B cell (primary cell): ENCODE measurements at regions of chr12 and their contacts with region 1.

Region 1: DNA sequence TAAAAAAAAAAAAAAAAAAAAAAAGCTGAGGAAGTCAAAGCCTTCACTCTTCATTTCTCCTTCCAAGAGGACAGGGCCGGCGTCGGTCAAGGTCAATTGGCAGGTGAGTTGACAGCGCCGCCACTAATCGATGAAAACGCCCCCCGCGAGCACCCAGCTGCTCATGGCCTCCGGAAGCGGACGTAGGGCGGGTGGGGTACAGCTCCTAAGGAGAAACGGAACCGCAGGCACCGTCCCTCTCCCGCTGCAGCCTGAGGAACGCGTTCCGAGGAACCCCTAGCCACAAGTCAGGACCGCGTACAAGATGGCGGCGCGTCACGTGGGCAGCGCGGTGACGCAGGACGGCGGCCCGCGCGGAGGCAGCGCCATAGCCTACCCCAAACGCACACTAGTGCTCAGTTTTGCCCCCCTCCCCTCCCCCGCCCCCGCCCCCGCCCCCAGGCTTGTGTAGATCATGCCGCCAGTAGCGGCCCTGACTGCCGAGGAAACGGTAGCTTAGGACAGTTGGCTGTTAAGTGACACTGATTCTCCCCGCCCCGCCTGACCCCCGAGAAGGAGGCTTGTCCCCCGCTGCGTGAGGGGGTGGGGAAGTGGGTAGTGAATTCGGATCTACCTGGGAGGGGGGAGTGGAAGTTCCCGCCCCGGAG is at the start of gene ATF1:
- DNase-seq: peak; percentile 95
- ATAC-seq: peak; percentile 80
- H3K4me3 ChIP-seq: peak within 1 kb of the TSS; percentile 92 to 98 (median 96)
- H3K4me3 Mint-ChIP-seq: peak within 1 kb of the TSS; percentile 91
- H3K27ac ChIP-seq: peak within 1 kb of the TSS; percentile 95
- H3K27ac Mint-ChIP-seq: peak within 1 kb of the TSS; percentile 99
- H3K4me1 ChIP-seq: peaks cover 10 to 33% of the 10 kb centered on the region in 2 donors
- H3K4me1 Mint-ChIP-seq: peaks cover 33% of the 10 kb centered on the region
- H3K27me3 ChIP-seq: no peaks in the 10 kb centered on the region
- H3K27me3 Mint-ChIP-seq: no peaks in the 10 kb centered on the region
- CTCF ChIP-seq: no peak
- total RNA-seq, gene ATF1: 39.5 and 45.4 TPM in 2 replicates

Region 2: GRCh38 chr12:50400598-50401364 is 363.0 kb before region 1 on chr12 and contains the start of gene LARP4:
- CTCF ChIA-PET with region 1: no interaction called
- POLR2A ChIA-PET with region 1: no interaction called
- intact Hi-C with region 1: loop called (anchors 2 kb)
- DNase-seq: peak; percentile 93
- ATAC-seq: peak; percentile 94
- H3K4me3 ChIP-seq: peak within 1 kb of the TSS; percentile 53 to 90 (median 81)
- H3K4me3 Mint-ChIP-seq: peak within 1 kb of the TSS; percentile 92
- H3K27ac ChIP-seq: peak within 1 kb of the TSS; percentile 62 to 88
- H3K27ac Mint-ChIP-seq: peak within 1 kb of the TSS; percentile 93
- H3K4me1 ChIP-seq: peaks cover 22 to 24% of the 10 kb centered on the region in 2 donors
- H3K4me1 Mint-ChIP-seq: peaks cover 38% of the 10 kb centered on the region
- H3K27me3 ChIP-seq: no peaks in the 10 kb centered on the region
- H3K27me3 Mint-ChIP-seq: peaks cover 9% of the 10 kb centered on the region
- CTCF ChIP-seq: no peak
- total RNA-seq, gene LARP4: 42.0 and 48.4 TPM in 2 replicates

Region 3: DNA sequence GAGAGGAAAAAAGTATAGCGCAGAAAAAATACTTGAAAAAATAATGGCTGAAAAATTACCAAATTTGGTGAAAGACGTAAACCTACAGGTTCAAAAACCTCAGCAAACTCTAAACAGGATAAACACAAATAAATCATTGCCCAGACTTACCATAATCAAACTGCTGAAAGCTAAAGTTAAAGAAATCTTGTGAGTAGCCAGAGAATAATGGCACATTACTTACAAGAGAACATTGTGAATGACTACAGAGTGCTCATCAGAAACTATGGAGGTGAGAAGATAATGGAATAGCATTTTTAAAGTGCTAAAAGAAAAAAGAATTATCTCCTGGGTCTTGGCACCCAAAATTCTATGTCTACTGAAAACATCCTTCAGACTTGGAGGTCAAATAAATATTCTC is 36.1 kb after region 1 on chr12:
- CTCF ChIA-PET with region 1: no interaction called
- POLR2A ChIA-PET with region 1: no interaction called
- intact Hi-C with region 1: no loop called
- DNase-seq: no peak
- ATAC-seq: no peak
- H3K4me3 ChIP-seq: no peak overlapping the region
- H3K4me3 Mint-ChIP-seq: no peak overlapping the region
- H3K27ac ChIP-seq: no peak overlapping the region
- H3K27ac Mint-ChIP-seq: no peak overlapping the region
- H3K4me1 ChIP-seq: no peaks in the 10 kb centered on the region
- H3K4me1 Mint-ChIP-seq: no peaks in the 10 kb centered on the region
- H3K27me3 ChIP-seq: no peaks in the 10 kb centered on the region
- H3K27me3 Mint-ChIP-seq: no peaks in the 10 kb centered on the region
- CTCF ChIP-seq: no peak

Region 4: GRCh38 chr12:50825372-50825838 is 61.6 kb after region 1 on chr12:
- CTCF ChIA-PET with region 1: interaction called, 26 read pairs
- POLR2A ChIA-PET with region 1: interaction called, 4 read pairs
- intact Hi-C with region 1: loop called (anchors 2 kb)
- DNase-seq: peak; percentile 76
- ATAC-seq: peak; percentile 73
- H3K4me3 ChIP-seq: no peak overlapping the region
- H3K4me3 Mint-ChIP-seq: peak overlapping the region; percentile 27
- H3K27ac ChIP-seq: peak overlapping the region; percentile 2 to 72
- H3K27ac Mint-ChIP-seq: peak overlapping the region; percentile 62
- H3K4me1 ChIP-seq: peaks cover 3% of the 10 kb centered on the region in 2 donors
- H3K4me1 Mint-ChIP-seq: peaks cover 6% of the 10 kb centered on the region
- H3K27me3 ChIP-seq: no peaks in the 10 kb centered on the region
- H3K27me3 Mint-ChIP-seq: no peaks in the 10 kb centered on the region
- CTCF ChIP-seq: peak; percentile 76

Region 5: DNA sequence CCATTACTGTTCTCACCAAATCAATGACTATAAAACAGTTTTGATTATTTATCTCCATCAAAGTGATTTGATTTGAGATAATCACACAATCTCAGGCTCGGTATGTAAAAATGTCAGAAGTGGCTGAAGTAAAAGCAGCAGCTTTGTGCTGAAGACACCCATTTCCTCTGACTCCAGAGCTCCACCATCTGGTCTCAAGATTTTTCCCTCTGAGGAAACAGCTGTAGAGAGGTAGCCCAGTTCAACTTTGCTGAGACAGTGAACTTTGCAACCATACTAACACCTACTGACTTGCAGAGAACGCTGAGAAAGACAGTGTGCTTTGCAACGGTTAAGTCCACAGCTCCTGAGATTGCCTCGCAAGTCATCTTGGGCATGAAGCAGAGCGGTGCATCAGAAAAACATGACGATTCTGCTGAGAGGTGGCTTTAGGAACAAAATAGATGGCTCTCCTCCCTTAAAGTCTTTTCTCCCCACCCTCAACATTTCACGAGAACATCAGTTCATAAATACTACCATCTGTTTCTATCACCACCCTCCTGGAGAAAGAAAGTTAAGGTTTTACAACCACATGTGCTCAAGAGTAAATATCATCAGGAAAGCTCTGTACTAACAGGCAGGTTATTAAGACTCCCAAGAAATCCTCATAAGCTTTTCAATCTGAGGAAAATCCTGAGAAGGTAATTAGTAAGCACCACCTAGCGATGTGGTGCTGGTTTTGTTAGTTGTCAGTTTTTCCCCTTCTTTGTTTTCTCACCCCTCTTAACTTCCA is 223.4 kb after region 1 on chr12:
- CTCF ChIA-PET with region 1: interaction called, 102 read pairs
- POLR2A ChIA-PET with region 1: interaction called, 3 read pairs
- intact Hi-C with region 1: loop called (anchors 1 kb)
- DNase-seq: peak; percentile 65
- ATAC-seq: peak; percentile 80
- H3K4me3 ChIP-seq: no peak overlapping the region
- H3K4me3 Mint-ChIP-seq: no peak overlapping the region
- H3K27ac ChIP-seq: no peak overlapping the region
- H3K27ac Mint-ChIP-seq: no peak overlapping the region
- H3K4me1 ChIP-seq: peaks cover 0 to 2% of the 10 kb centered on the region in 2 donors
- H3K4me1 Mint-ChIP-seq: peaks cover 6% of the 10 kb centered on the region
- H3K27me3 ChIP-seq: no peaks in the 10 kb centered on the region
- H3K27me3 Mint-ChIP-seq: no peaks in the 10 kb centered on the region
- CTCF ChIP-seq: peak; percentile 40

Region 6: GRCh38 chr12:51047655-51048540 is 284.1 kb after region 1 on chr12 and contains the start of gene LETMD1:
- CTCF ChIA-PET with region 1: interaction called, 3 read pairs
- POLR2A ChIA-PET with region 1: no interaction called
- intact Hi-C with region 1: loop called (anchors 2 kb)
- DNase-seq: peak; percentile 97
- ATAC-seq: peak; percentile 95
- H3K4me3 ChIP-seq: peak within 1 kb of the TSS; percentile 75 to 91 (median 79)
- H3K4me3 Mint-ChIP-seq: peak within 1 kb of the TSS; percentile 96
- H3K27ac ChIP-seq: peak within 1 kb of the TSS; percentile 81
- H3K27ac Mint-ChIP-seq: peak within 1 kb of the TSS; percentile 95
- H3K4me1 ChIP-seq: peaks cover 18 to 22% of the 10 kb centered on the region in 2 donors
- H3K4me1 Mint-ChIP-seq: peaks cover 29% of the 10 kb centered on the region
- H3K27me3 ChIP-seq: no peaks in the 10 kb centered on the region
- H3K27me3 Mint-ChIP-seq: no peaks in the 10 kb centered on the region
- CTCF ChIP-seq: peak; percentile 97
- total RNA-seq, gene LETMD1: 101 and 105 TPM in 2 replicates

Region 7: GRCh38 chr12:51238510-51239334 is 475.0 kb after region 1 on chr12 and contains the start of gene DAZAP2:
- CTCF ChIA-PET with region 1: interaction called, 3 read pairs
- POLR2A ChIA-PET with region 1: interaction called, 10 read pairs
- intact Hi-C with region 1: loop called (anchors 10 kb)
- DNase-seq: peak; percentile 98
- ATAC-seq: peak; percentile 92
- H3K4me3 ChIP-seq: peak within 1 kb of the TSS; percentile 69 to 100 (median 100)
- H3K4me3 Mint-ChIP-seq: peak within 1 kb of the TSS; percentile 93
- H3K27ac ChIP-seq: peak within 1 kb of the TSS; percentile 100
- H3K27ac Mint-ChIP-seq: peak within 1 kb of the TSS; percentile 100
- H3K4me1 ChIP-seq: peaks cover 24 to 34% of the 10 kb centered on the region in 2 donors
- H3K4me1 Mint-ChIP-seq: peaks cover 40% of the 10 kb centered on the region
- H3K27me3 ChIP-seq: no peaks in the 10 kb centered on the region
- H3K27me3 Mint-ChIP-seq: no peaks in the 10 kb centered on the region
- CTCF ChIP-seq: peak; percentile 31
- total RNA-seq, gene DAZAP2: 219 and 233 TPM in 2 replicates

Region 8: GRCh38 chr12:51326762-51327439 is 563.1 kb after region 1 on chr12:
- CTCF ChIA-PET with region 1: interaction called, 5 read pairs
- POLR2A ChIA-PET with region 1: interaction called, 3 read pairs
- intact Hi-C with region 1: loop called (anchors 10 kb)
- DNase-seq: peak; percentile 73
- ATAC-seq: peak; percentile 28
- H3K4me3 ChIP-seq: peak overlapping the region in 1 of 5 experiments; percentile 22
- H3K4me3 Mint-ChIP-seq: peak overlapping the region; percentile 35
- H3K27ac ChIP-seq: peak overlapping the region; percentile 59 to 64
- H3K27ac Mint-ChIP-seq: peak overlapping the region; percentile 83
- H3K4me1 ChIP-seq: peaks cover 72 to 79% of the 10 kb centered on the region in 2 donors
- H3K4me1 Mint-ChIP-seq: peaks cover 80% of the 10 kb centered on the region
- H3K27me3 ChIP-seq: no peaks in the 10 kb centered on the region
- H3K27me3 Mint-ChIP-seq: no peaks in the 10 kb centered on the region
- CTCF ChIP-seq: no peak